Adrenal gland (tissue), 19 donors: ENCODE measurements at regions of chr1 and their contacts with region 1.

Region 1: DNA sequence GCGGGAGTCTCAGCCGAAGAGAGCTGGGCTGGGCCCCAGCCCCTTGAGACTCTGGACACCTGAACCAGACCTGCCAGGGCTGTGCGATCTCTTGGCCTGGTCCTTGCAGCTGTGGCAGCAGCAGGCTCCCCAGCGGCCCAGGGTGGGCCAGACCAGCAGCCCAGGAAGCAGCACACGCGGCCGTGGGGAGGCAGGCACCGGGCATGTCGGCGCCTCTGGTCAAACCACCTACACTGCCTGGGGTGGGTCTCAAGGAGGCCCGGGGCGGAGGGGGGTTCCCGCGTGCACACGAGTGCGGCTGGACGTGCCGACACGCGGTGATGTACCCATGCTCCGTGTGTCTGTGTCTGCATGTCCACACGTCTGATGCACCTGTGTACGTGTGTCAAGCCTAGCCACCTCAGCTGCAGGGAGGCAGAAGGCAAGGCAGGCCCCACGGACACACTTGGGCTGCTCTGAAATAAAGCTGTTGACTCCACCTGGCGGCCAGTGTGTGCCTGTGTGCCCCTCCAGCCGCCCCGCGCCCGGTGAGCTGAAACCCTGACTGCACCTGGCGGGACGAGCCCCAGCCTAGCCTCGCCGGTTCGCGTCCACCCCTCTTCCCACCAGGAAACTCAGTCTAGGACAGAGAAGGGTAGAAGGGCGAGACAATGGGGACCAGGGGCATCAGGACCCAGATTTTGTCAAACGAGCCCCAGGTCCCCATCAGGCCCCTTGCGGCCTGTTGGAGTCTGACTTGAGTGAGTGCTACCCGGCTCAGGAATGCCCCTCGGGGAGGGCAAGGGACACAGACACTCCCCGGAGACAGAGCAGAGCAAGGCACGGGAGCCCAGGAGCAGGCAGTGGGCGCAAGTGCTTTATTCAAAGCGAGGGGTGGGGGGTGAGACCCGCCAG is 11.6 kb downstream of the SCNN1D start:
- DNase-seq: peak in 6 of 7 donors; percentile 71 to 90 (median 83)
- H3K4me3 ChIP-seq: no peak overlapping the region
- H3K27ac ChIP-seq: no peak overlapping the region
- H3K4me1 ChIP-seq: no peaks in the 10 kb centered on the region
- H3K27me3 ChIP-seq: no peaks in the 10 kb centered on the region
- CTCF ChIP-seq: peak; percentile 45 to 84 (median 71)
- POLR2A ChIP-seq: no peak

Region 2: DNA sequence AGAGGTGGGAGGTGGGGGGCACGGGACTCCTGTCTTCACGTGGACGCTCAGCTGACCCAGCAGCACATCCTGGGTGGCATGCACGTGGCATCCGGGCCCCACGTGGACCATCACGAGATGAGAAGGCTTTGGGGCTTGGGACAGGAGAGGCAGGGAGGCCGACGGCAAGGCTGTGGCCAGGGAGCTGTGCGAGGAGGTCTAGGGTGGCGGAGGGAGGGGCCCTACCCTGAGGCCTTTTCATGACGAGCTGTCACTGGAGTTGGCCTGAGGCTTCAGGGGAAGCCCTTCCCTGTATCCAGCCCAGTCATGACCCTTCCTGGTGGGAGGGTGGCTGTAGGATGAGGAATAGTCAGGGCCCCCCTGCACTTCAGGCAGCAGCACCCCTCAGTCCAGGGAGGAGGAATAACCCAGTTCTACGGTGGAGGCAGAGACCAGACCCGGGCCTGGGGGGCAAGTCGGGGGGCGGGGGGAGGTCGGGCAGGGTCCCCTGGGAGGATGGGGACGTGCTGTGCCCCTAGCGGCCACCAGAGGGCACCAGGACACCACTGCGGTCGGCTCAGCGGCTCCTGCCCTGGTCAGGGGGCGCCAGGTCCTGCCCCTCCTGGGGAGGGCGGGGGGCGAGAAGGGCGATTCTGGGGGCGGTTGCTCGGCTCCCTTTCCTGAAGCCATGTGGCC is 307.9 kb before region 1 on chr1:
- intact Hi-C with region 1: loop called in 1 of 2 experiments (anchors 10 kb)
- DNase-seq: peak in 2 of 7 donors; percentile 48 to 54
- H3K4me3 ChIP-seq: no peak overlapping the region
- H3K27ac ChIP-seq: no peak overlapping the region
- H3K4me1 ChIP-seq: no peaks in the 10 kb centered on the region
- H3K27me3 ChIP-seq: peaks cover 25% of the 10 kb centered on the region
- CTCF ChIP-seq: peak; percentile 51 to 92 (median 62)
- POLR2A ChIP-seq: no peak

Region 3: GRCh38 chr1:1122078-1122811 is 169.6 kb before region 1 on chr1:
- intact Hi-C with region 1: loop called (anchors 2 kb)
- DNase-seq: peak; percentile 74 to 86 (median 85)
- H3K4me3 ChIP-seq: peak overlapping the region in 1 of 4 donors; percentile 47
- H3K27ac ChIP-seq: no peak overlapping the region
- H3K4me1 ChIP-seq: peaks cover 0 to 6% of the 10 kb centered on the region in 2 donors
- H3K27me3 ChIP-seq: no peaks in the 10 kb centered on the region
- CTCF ChIP-seq: peak; percentile 87 to 94 (median 90)
- POLR2A ChIP-seq: no peak

Region 4: DNA sequence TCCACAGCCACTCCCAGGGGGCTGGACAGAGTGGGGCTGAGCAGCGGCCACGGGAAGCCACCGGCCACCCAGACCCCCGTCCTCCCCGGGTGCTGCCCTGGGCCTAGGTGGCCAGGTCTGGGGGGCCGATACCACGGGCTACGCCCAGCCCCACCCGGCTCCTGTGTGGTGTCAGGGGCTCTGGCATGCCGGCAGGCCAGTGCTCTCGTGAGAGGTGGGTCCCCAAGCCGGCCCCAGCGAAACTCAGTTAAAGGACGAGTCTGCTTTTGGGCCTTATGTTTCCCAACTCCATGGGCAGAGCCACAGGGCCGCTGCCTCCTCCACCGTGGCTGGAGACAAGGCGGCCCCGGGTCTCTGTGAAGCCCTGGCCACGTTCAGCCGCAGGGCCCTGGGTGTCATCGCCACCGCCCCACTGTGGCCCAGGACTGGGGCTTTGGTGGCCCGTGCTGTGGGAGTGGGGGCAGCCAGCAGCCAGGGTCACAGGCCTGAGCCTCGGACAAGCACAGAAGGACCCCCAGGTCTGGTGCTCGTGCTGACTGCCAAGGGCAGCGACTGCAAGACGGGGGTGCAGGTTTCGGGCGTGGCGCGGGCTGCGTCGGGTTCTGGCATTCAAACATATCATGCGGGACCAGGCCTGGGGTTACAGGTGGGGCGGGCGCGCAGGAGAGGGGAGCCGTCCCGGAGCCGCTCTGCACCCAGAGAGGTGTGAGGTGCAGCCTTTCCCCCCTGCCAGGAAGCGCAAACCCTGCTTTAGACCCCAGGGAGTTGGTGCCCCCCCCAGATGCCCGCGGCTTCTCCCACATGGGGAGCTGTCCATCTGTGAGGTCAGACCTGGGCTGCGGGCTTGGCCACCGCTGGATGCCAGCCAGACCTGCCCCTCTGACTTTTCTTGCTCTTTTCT is 164.0 kb before region 1 on chr1:
- intact Hi-C with region 1: loop called (anchors 2 kb)
- DNase-seq: no peak
- H3K4me3 ChIP-seq: no peak overlapping the region
- H3K27ac ChIP-seq: no peak overlapping the region
- H3K4me1 ChIP-seq: no peaks in the 10 kb centered on the region
- H3K27me3 ChIP-seq: no peaks in the 10 kb centered on the region
- CTCF ChIP-seq: no peak
- POLR2A ChIP-seq: no peak

Region 5: GRCh38 chr1:1387098-1388077 is 95.6 kb after region 1 on chr1:
- intact Hi-C with region 1: no loop called
- DNase-seq: no peak
- H3K4me3 ChIP-seq: no peak overlapping the region
- H3K27ac ChIP-seq: no peak overlapping the region
- H3K4me1 ChIP-seq: no peaks in the 10 kb centered on the region
- H3K27me3 ChIP-seq: no peaks in the 10 kb centered on the region
- CTCF ChIP-seq: no peak
- POLR2A ChIP-seq: no peak